OCI-LY7 (cell line): ENCODE measurements at regions of chr6 and their contacts with region 1.

Region 1: DNA sequence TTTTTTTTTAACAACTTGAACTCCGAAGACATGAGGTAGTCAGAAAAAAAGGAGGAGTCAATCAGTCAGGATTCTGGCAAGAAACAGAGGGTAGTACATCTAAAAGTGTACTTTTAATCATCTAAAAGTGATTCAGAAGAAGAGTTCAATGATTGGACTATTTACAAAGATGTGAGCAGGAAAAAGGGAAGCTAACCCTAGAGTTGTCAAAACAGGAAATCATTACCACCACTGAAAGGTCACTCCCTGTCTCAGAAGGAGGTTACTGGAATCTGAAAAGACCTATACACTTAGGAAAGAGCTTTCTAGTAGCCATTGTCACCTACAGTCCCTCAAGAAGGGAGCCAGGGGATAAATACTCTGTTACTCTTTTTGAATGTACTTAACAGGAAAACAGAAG is 16.7 kb upstream of the LMBRD1 start:
- DNase-seq: peak; percentile 38
- H3K4me3 ChIP-seq: no peak overlapping the region
- H3K27ac ChIP-seq: peak overlapping the region; percentile 0
- H3K4me1 ChIP-seq: peaks cover 41% of the 10 kb centered on the region
- CTCF ChIP-seq: no peak

Region 2: DNA sequence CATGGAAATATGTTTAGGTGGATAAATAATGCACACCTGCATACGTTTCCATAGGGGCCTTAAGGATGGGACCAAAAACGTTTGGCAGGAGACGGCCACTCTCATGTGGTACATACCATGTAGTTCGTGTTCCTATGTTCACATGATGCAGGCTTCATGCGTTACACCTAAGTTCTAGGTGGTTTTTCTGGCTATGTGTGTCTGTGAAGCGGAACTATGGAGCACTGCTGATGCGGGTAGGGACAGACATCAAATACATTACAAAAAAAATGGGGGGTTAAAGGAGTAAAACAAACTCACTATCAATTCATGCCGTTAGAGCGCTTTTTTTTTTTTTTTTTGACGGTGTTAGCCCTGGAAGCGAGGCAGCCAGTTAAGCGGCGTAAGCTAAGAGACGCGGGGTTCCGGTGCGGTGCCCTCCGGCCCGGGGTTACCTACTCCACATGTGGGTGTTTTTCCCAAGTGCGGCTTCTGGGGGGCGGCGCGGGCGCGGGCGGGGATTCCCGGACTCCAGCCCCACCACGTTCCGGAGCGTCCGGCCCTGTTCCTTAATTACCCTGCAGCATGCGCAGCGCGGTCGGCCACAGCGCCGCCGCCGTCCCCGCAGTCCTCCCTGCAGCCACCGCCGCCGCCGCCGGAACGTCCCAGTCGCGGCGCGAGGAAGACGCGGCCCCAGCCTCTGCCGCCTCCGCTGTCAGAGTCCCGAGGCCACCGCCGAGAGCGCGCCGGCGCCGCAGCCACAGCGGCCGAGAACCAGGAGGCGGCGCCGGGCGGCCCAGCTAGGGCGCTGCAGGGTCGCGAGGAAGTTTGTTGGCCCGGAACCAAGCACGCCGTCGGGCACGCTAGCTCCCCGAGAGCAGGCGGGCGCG is 53.5 kb after region 1 on chr6:
- CTCF ChIA-PET with region 1: no interaction called
- POLR2A ChIA-PET with region 1: interaction called, 4 read pairs
- intact Hi-C with region 1: loop called (anchors 2 kb)
- DNase-seq: peak; percentile 79
- H3K4me3 ChIP-seq: peak overlapping the region; percentile 68
- H3K27ac ChIP-seq: no peak overlapping the region
- H3K4me1 ChIP-seq: peaks cover 12% of the 10 kb centered on the region
- CTCF ChIP-seq: peak; percentile 49; the same call in 1 of the 2 replicates